Posterior cingulate gyrus (tissue), 11 donors: ENCODE measurements at regions of chr2 and their contacts with region 1.

Region 1: GRCh38 chr2:126657636-126658318 is 1.8 kb downstream of the GYPC start:
- DNase-seq: peak in 1 of 10 donors; percentile 77

Region 2: GRCh38 chr2:126614524-126615227 is 43.1 kb before region 1 on chr2:
- intact Hi-C with region 1: loop called (anchors 2 kb)
- DNase-seq: no peak

Region 3: GRCh38 chr2:127179766-127180165 is 522.0 kb after region 1 on chr2:
- intact Hi-C with region 1: no loop called
- DNase-seq: no peak